Activated CD4-positive, alpha-beta T cell treated with anti-CD3 and anti-CD28 coated beads for 36 hours (primary cell): ENCODE measurements at regions of chr14 and their contacts with region 1.

Region 1: DNA sequence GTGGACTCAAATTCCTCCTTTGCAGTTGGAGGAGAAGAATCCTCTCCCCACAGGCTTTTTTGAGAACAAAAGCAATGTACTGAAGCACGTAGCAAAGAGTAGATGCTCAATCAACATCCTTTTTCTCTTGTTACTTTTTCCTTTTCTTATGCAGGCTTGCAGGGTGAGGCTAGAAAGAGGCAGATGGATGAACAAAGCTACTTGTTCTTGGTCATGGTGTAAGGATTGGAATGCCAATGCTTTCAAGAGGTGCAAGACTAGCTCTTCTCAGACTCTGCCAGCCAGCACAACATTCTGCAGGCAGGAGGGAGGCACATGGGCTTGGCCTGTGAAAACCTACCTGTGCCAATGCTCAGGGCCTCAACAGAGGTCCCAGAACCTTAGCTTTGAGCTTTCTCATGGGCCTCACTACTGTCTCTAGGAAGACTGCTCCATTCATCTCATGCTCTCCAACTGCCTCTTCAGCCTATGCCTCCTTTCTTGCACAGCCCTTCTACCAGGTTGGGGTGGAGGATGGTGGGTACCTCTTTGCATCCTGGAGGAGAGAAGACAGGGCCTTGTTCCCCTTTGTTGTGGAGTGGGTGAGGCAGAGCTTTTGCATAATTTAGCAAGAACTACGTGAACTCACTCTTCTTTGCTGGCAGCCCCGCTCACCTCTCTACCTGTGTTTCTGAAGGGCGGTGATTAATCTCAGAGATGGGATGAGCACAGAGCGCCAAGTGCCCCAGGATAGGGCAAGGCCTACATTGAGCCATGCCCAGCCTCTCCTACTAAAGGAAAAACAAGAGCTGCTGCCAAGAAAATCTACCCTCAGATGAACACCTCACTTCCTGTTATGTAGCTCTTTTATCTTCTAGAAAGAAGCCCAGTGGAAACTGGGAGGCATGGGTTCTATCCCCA is 1119.7 kb downstream of the VRK1 start:
- DNase-seq: peak; percentile 39
- ATAC-seq: peak; percentile 56
- H3K4me3 Mint-ChIP-seq: no peak overlapping the region
- H3K27ac Mint-ChIP-seq: peak overlapping the region; percentile 73
- H3K4me1 Mint-ChIP-seq: peaks cover 22% of the 10 kb centered on the region
- H3K27me3 Mint-ChIP-seq: no peaks in the 10 kb centered on the region

Region 2: GRCh38 chr14:97802430-97803373 is 114.2 kb before region 1 on chr14:
- CTCF ChIA-PET with region 1: no interaction called
- POLR2A ChIA-PET with region 1: no interaction called
- intact Hi-C with region 1: no loop called
- DNase-seq: no peak
- ATAC-seq: no peak
- H3K4me3 Mint-ChIP-seq: no peak overlapping the region
- H3K27ac Mint-ChIP-seq: no peak overlapping the region
- H3K4me1 Mint-ChIP-seq: peaks cover 8% of the 10 kb centered on the region
- H3K27me3 Mint-ChIP-seq: no peaks in the 10 kb centered on the region

Region 3: DNA sequence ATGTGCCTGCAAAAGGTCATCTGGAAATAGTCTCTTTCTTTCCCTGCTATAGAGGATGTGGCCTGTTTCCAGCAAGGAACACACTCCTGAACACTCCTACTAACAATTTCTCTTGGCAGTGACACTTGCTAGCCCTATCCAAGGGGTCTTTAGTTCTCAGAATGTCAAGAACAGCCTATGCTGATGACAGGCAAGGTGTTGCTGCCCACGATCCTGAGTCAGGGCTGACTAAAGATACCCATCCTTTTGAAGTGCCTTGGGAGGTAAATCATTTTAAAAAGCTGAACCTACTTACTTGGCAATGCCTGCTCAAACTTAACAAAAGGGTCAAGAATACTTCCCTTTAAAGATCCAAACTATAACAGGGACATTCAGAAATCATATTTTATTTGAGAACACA is 26.7 kb after region 1 on chr14:
- CTCF ChIA-PET with region 1: interaction called, 3 read pairs
- POLR2A ChIA-PET with region 1: no interaction called
- intact Hi-C with region 1: loop called in 1 of 2 experiments (anchors 1 kb)
- DNase-seq: peak; percentile 58
- ATAC-seq: peak; percentile 74
- H3K4me3 Mint-ChIP-seq: no peak overlapping the region
- H3K27ac Mint-ChIP-seq: peak overlapping the region; percentile 44
- H3K4me1 Mint-ChIP-seq: peaks cover 29% of the 10 kb centered on the region
- H3K27me3 Mint-ChIP-seq: no peaks in the 10 kb centered on the region

Region 4: GRCh38 chr14:97994020-97994531 is 77.2 kb after region 1 on chr14:
- CTCF ChIA-PET with region 1: no interaction called
- POLR2A ChIA-PET with region 1: no interaction called
- intact Hi-C with region 1: loop called in 1 of 2 experiments (anchors 2 kb)
- DNase-seq: peak; percentile 52
- ATAC-seq: peak; percentile 81
- H3K4me3 Mint-ChIP-seq: peak overlapping the region; percentile 18
- H3K27ac Mint-ChIP-seq: peak overlapping the region; percentile 94
- H3K4me1 Mint-ChIP-seq: peaks cover 71% of the 10 kb centered on the region
- H3K27me3 Mint-ChIP-seq: no peaks in the 10 kb centered on the region